CD4-positive, alpha-beta T cell (primary cell): ENCODE measurements at regions of chr20 and their contacts with region 1.

Region 1: DNA sequence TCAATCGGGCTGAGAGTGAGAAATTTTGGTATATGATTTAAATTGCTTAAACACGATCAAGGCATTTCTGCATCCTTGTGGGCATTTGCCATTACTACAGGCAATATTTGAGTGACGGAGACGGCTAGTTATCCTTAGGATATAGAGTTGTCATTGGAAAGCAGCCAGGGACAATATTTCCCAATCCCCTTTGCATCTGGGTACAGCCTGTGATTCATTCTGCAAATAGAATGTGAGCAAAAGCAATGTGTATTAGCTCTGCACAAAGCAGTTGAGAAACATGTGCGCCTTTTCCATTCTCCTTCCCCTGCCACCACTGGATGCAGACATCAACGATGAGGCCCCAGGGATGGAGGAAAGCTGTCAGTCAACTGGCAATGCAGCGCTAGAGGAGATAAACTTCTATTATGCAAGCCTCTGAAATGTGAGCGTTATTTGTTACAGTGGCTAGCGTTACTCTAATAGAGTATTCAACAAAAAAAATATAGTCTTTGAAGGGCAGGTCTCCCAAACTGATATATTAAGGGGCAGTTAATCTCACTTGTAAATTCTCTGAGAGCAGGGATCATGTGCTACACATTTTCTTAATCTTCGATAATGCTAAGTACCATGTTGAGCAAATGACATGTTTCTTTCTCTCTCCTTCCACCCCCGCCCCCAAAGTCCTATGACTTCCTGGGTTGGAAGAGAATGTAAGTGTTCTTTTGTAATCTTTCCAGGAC is 37.1 kb upstream of the NCOA3 start:
- DNase-seq: peak in 2 of 14 experiments; percentile 29 to 43
- ATAC-seq: no peak
- H3K4me3 ChIP-seq: no peak overlapping the region
- H3K4me3 Mint-ChIP-seq: no peak overlapping the region
- H3K27ac ChIP-seq: no peak overlapping the region
- H3K27ac Mint-ChIP-seq: no peak overlapping the region
- H3K4me1 ChIP-seq: no peaks in the 10 kb centered on the region
- H3K4me1 Mint-ChIP-seq: no peaks in the 10 kb centered on the region
- H3K27me3 ChIP-seq: no peaks in the 10 kb centered on the region
- H3K27me3 Mint-ChIP-seq: no peaks in the 10 kb centered on the region
- CTCF ChIP-seq: no peak

Region 2: GRCh38 chr20:47181056-47181862 is 283.3 kb before region 1 on chr20:
- CTCF ChIA-PET with region 1: no interaction called
- POLR2A ChIA-PET with region 1: no interaction called
- intact Hi-C with region 1: no loop called
- DNase-seq: peak in 3 of 14 experiments; percentile 22 to 52 (median 37)
- ATAC-seq: no peak
- H3K4me3 ChIP-seq: no peak overlapping the region
- H3K4me3 Mint-ChIP-seq: no peak overlapping the region
- H3K27ac ChIP-seq: no peak overlapping the region
- H3K27ac Mint-ChIP-seq: no peak overlapping the region
- H3K4me1 ChIP-seq: no peaks in the 10 kb centered on the region
- H3K4me1 Mint-ChIP-seq: no peaks in the 10 kb centered on the region
- H3K27me3 ChIP-seq: no peaks in the 10 kb centered on the region
- H3K27me3 Mint-ChIP-seq: peaks cover 7% of the 10 kb centered on the region
- CTCF ChIP-seq: no peak

Region 3: DNA sequence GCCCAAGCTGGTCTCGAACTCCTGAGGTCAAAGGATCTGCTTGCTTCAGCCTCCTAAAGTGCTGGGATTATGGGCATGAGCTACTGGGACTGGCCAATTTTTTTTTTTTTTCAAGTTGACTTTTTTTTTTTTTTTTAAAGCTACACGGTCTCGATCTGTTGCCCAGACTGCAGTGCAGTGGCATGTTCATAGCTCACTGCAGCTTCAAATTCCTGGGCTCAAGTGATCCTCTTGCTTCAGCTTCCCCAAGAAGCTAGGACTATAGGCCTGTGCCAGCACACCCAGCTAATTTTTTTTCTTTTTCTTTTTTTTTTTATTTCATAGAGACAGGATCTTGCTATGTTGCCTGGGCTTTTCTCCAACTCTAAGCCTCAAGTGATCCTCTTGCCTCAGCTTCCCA is 96.6 kb after region 1 on chr20:
- CTCF ChIA-PET with region 1: interaction called, 11 read pairs
- POLR2A ChIA-PET with region 1: no interaction called
- intact Hi-C with region 1: no loop called
- DNase-seq: no peak
- ATAC-seq: no peak
- H3K4me3 ChIP-seq: no peak overlapping the region
- H3K4me3 Mint-ChIP-seq: no peak overlapping the region
- H3K27ac ChIP-seq: no peak overlapping the region
- H3K27ac Mint-ChIP-seq: no peak overlapping the region
- H3K4me1 ChIP-seq: peaks cover 30% of the 10 kb centered on the region
- H3K4me1 Mint-ChIP-seq: peaks cover 75% of the 10 kb centered on the region
- H3K27me3 ChIP-seq: no peaks in the 10 kb centered on the region
- H3K27me3 Mint-ChIP-seq: no peaks in the 10 kb centered on the region
- CTCF ChIP-seq: no peak